Dendritic cell treated with granulocyte-macrophage colony-stimulating factor and Interleukin-4, amounts not matched to agents 40 ng/mL and 50 ng/mL, for 4 days (primary cell): ENCODE measurements at regions of chr6 and their contacts with region 1.

Region 1: DNA sequence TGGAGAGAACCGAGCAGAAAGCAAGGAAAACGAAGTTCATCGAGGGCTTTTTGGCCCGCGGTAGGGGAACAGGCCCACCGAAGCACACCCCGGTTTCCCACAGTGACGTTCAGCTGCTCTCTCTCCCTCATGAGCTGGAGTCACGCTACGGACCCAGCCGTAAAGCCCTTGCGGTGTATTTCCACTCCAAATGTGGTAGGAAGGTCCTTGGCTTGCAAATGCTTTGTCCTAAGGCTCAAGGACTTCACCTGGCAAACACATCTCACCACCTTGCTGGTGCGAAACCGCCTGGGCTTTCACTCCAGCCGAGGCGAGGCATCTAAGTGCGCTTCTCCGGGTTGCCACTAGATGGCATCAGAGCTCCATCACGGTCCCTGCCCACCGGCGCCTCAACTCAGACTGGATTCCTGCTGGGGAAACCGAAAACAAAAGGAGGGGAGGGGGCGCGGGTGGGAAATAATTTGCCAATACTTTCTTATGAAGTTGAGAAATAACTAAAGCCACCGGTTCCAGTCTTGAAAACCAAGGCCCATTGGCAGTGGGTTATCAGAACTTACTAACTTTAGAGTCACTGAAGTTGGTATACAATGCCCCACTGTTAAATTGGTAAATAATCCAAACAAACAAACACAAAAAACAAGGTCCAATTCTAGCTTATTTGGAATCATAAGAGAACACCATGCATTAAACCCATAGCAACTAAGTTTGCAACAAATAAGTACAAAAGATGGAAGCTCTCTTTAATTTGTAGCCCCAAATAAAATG is 13.4 kb upstream of the FOXC1 start:
- H3K4me3 Mint-ChIP-seq: no peak overlapping the region
- H3K27ac Mint-ChIP-seq: no peak overlapping the region
- H3K4me1 Mint-ChIP-seq: peaks cover 4% of the 10 kb centered on the region
- H3K27me3 Mint-ChIP-seq: peaks cover 81% of the 10 kb centered on the region

Region 2: DNA sequence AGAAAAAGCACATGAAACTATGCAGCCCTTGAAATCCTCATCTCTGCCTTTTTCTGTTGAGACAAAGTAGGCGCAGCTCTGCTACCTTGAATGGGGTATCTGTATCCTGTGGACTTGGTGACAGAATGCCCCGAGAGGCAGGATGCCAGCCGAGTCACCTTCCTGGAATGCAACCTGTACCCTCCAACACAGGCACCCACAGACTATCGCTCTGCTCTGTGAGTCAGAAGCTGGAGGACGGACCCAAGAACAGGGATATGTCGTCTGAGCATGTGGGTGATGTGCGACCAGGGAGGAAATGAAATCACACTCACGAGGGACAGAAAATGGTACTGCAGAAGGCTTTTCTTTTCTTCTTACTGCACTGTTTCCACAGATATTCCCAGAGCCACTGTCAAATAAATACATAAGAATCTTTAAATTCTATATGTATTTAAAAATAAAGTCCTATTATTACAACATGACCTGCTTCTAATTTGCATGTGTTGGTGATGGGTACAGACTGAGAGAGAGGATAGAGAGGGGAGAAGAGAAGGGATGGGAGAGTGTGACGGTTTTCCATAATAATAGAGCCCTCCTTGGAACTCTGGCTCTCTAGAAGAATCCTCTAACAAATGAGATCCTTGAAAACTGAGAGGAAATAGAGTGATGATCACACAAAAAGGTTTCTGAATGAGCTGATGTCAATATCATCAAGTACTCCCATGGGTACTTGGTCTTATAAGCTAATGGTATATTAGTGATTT is 321.5 kb after region 1 on chr6:
- intact Hi-C with region 1: no loop called
- H3K4me3 Mint-ChIP-seq: no peak overlapping the region
- H3K27ac Mint-ChIP-seq: no peak overlapping the region
- H3K4me1 Mint-ChIP-seq: peaks cover 5% of the 10 kb centered on the region
- H3K27me3 Mint-ChIP-seq: no peaks in the 10 kb centered on the region

Region 3: GRCh38 chr6:2634139-2634964 is 1038.1 kb after region 1 on chr6:
- intact Hi-C with region 1: loop called (anchors 1 kb)
- H3K4me3 Mint-ChIP-seq: peak overlapping the region; percentile 70
- H3K27ac Mint-ChIP-seq: no peak overlapping the region
- H3K4me1 Mint-ChIP-seq: no peaks in the 10 kb centered on the region
- H3K27me3 Mint-ChIP-seq: peaks cover 28% of the 10 kb centered on the region

Region 4: GRCh38 chr6:2695454-2696095 is 1099.3 kb after region 1 on chr6:
- intact Hi-C with region 1: loop called (anchors 2 kb)
- H3K4me3 Mint-ChIP-seq: no peak overlapping the region
- H3K27ac Mint-ChIP-seq: no peak overlapping the region
- H3K4me1 Mint-ChIP-seq: no peaks in the 10 kb centered on the region
- H3K27me3 Mint-ChIP-seq: peaks cover 2% of the 10 kb centered on the region

Region 5: GRCh38 chr6:2749969-2750600 is 1153.8 kb after region 1 on chr6:
- intact Hi-C with region 1: loop called (anchors 10 kb)
- H3K4me3 Mint-ChIP-seq: no peak overlapping the region
- H3K27ac Mint-ChIP-seq: no peak overlapping the region
- H3K4me1 Mint-ChIP-seq: no peaks in the 10 kb centered on the region
- H3K27me3 Mint-ChIP-seq: peaks cover 7% of the 10 kb centered on the region